ENCODE measurements at regions of chr1 and their contacts with region 1.

Region 1: GRCh38 chr1:94335950-94336349 is 82.2 kb upstream of the ABCD3 start:
- DNase-seq: peak; percentile 72
- H3K4me3 ChIP-seq: no peak overlapping the region
- CTCF ChIP-seq: peak; percentile 72

Region 2: GRCh38 chr1:93980320-93981273 is 355.4 kb before region 1 on chr1:
- CTCF ChIA-PET with region 1: interaction called, 16 read pairs
- POLR2A ChIA-PET with region 1: no interaction called
- DNase-seq: no peak
- H3K4me3 ChIP-seq: no peak overlapping the region
- CTCF ChIP-seq: peak; percentile 14

Region 3: GRCh38 chr1:94061513-94062443 is 274.2 kb before region 1 on chr1:
- CTCF ChIA-PET with region 1: interaction called, 726 read pairs
- POLR2A ChIA-PET with region 1: interaction called, 7 read pairs
- DNase-seq: no peak
- H3K4me3 ChIP-seq: no peak overlapping the region
- CTCF ChIP-seq: peak; percentile 88

Region 4: GRCh38 chr1:94191216-94191615 is 144.7 kb before region 1 on chr1:
- CTCF ChIA-PET with region 1: interaction called, 13 read pairs
- POLR2A ChIA-PET with region 1: no interaction called
- DNase-seq: no peak
- H3K4me3 ChIP-seq: no peak overlapping the region
- CTCF ChIP-seq: no peak

Region 5: DNA sequence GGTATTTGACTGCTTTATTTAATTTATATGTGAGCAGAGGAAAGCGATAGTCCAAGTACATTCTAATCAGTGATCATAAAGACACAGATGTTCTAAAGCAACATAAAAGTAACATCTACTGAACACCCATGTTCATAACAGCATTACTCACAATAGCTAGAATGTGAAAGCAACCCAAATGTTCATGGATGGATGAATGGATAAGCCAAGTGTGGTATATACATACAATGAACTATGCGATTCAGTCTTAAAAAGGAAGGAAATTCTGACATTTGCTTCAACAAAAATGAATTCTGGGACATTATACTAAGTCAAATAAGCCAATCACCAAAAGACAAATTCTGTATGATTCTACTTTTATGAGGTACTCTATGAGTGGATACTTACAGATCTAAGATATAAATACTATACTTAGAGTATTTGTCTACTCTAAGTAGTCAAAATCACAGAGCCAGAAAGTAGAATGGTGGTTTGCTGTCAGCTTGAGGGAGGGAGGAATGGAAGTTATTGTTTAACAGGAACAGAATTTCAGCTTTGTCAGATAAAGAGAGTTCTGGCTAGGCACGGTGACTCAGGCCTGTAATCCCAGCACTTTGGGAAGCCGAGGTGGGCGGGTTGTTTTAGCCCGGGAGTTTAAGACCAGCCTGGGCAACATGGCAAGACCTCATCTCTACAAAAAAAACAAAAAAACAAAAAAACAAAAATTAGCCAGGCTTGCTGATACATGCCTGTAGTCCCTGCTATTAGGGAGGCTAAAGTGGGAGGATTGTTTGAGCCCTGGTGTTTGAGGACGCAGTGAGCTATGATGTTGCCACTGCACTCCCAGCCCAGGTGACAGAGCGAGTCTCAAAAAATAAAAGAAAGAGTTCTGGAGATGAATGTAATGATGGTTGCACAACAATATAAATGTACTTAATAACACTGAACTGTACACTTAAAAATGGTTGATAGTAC is 18.8 kb before region 1 on chr1:
- CTCF ChIA-PET with region 1: interaction called, 10 read pairs
- POLR2A ChIA-PET with region 1: no interaction called
- DNase-seq: no peak
- H3K4me3 ChIP-seq: no peak overlapping the region
- CTCF ChIP-seq: no peak

Region 6: DNA sequence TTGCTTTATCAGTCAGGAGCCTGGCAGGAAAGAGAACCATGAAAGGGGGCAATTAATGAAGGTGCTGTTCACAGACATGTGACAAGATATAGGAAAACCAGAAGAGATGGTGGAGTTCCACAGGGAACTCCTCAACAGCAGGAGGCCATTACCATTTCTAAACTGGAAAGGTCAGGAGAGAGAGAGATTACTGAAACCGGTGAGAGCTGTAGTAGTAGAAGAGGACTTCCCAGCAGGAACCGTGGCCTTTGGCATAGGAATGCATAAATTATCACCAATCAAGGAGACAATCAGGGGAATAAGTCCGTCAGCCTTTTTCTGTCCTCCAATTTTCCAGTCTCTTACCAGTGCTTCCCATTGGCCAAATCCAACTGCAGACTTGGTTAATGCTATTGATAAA is 59.3 kb after region 1 on chr1:
- CTCF ChIA-PET with region 1: no interaction called
- POLR2A ChIA-PET with region 1: no interaction called
- DNase-seq: no peak
- H3K4me3 ChIP-seq: no peak overlapping the region
- CTCF ChIP-seq: no peak

Region 7: DNA sequence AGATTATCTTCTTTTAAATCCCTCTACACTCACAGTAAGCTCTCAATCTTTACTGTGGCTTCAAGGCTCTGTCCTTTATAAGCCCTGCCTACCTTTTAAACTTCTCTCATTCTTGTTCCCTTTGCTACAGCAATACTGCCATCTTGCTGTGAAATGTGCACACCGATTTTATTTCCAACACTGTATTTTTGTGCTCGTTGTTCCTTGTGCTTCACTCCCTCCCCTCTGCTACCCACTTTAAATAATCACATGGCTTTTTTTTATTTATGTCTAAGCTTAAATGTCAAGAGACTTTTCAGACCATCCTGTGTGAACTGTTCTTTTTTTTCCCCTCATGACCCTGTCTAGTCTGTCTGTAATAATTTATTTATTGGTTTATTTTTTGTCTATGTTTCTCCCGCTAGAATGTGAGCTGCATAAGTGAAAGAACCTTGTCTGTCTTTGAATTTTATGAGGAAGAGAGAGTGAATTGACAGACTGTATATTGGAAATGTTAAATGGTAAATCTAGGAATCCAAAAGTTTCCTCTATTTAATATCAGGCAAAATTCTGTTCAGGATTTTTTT is 127.9 kb after region 1 on chr1:
- CTCF ChIA-PET with region 1: interaction called, 127 read pairs
- POLR2A ChIA-PET with region 1: no interaction called
- DNase-seq: no peak
- H3K4me3 ChIP-seq: no peak overlapping the region
- CTCF ChIP-seq: peak; percentile 45

Region 8: GRCh38 chr1:94504601-94505000 is 168.7 kb after region 1 on chr1:
- CTCF ChIA-PET with region 1: no interaction called
- POLR2A ChIA-PET with region 1: no interaction called
- DNase-seq: no peak
- H3K4me3 ChIP-seq: no peak overlapping the region
- CTCF ChIP-seq: no peak

Measured in AG04449 (cell line).